HCT116 (cell line): ENCODE measurements at regions of chr2 and their contacts with region 1.

Region 1: DNA sequence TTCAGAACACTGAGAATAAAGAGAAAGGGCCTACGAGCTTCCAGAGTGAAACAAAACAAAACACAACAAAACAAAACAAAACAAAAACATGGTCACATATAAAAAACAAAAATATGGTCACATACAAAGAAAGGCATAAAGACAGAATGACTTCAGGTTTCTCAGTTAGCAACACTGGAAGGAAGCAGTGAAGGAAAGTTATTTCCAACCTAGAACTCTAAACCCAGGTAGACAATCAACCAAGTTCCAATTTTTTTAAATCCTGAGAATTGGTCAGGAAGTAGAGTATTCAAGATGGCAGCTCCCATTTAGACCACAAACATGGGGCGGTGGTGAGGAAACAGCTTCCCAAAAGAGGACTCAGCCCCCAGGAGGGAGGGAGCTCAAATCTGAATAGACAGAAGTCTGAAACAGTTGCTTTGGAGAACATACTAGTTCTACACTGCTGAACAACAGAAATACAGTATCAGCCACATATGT is 9.1 kb downstream of the DRC1 start:
- DNase-seq: no peak
- ATAC-seq: no peak
- H3K4me3 ChIP-seq: no peak overlapping the region
- H3K27ac ChIP-seq: no peak overlapping the region
- H3K4me1 ChIP-seq: no peaks in the 10 kb centered on the region
- H3K27me3 ChIP-seq: no peaks in the 10 kb centered on the region
- CTCF ChIP-seq: no peak
- POLR2A ChIP-seq: no peak
- RAD21 ChIP-seq: no peak

Region 2: DNA sequence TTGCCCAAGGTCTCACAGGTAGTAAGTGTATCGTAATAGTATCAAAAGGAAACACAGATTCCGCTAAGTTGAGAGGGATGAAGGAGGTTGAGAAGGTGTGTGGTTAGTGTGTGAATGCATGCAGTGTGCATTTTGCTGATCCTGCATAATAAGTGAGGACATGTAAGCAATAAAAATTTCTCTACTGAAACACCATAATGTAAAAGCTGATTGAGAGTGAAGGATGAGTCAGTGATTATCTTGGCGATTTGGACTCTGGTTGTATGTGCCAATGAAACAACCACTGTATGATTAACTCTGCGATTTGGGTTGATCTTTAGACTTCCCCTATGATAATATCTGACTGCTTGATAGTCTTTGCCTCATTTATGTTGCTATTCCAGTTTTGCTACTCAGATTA is 47.5 kb before region 1 on chr2:
- CTCF ChIA-PET with region 1: no interaction called
- POLR2A ChIA-PET with region 1: no interaction called
- RAD21 ChIA-PET with region 1: no interaction called
- intact Hi-C with region 1: loop called (anchors 1 kb)
- DNase-seq: no peak
- ATAC-seq: no peak
- H3K4me3 ChIP-seq: no peak overlapping the region
- H3K27ac ChIP-seq: no peak overlapping the region
- H3K4me1 ChIP-seq: peaks cover 0 to 12% of the 10 kb centered on the region in 2 experiments; a peak in 2 of 4 replicates
- H3K27me3 ChIP-seq: no peaks in the 10 kb centered on the region
- CTCF ChIP-seq: no peak
- POLR2A ChIP-seq: no peak
- RAD21 ChIP-seq: no peak